ENCODE measurements at regions of chr1 and their contacts with region 1.

Region 1: GRCh38 chr1:154479764-154480421 is 22.1 kb upstream of the TDRD10 start:
- DNase-seq: peak; percentile 69 to 77
- H3K4me3 ChIP-seq: no peak overlapping the region
- H3K27ac ChIP-seq: peak overlapping the region in 1 of 2 donors; percentile 39
- H3K4me1 ChIP-seq: no peaks in the 10 kb centered on the region
- H3K27me3 ChIP-seq: no peaks in the 10 kb centered on the region
- CTCF ChIP-seq: peak; percentile 87 to 98 (median 95)
- POLR2A ChIP-seq: no peak

Region 2: DNA sequence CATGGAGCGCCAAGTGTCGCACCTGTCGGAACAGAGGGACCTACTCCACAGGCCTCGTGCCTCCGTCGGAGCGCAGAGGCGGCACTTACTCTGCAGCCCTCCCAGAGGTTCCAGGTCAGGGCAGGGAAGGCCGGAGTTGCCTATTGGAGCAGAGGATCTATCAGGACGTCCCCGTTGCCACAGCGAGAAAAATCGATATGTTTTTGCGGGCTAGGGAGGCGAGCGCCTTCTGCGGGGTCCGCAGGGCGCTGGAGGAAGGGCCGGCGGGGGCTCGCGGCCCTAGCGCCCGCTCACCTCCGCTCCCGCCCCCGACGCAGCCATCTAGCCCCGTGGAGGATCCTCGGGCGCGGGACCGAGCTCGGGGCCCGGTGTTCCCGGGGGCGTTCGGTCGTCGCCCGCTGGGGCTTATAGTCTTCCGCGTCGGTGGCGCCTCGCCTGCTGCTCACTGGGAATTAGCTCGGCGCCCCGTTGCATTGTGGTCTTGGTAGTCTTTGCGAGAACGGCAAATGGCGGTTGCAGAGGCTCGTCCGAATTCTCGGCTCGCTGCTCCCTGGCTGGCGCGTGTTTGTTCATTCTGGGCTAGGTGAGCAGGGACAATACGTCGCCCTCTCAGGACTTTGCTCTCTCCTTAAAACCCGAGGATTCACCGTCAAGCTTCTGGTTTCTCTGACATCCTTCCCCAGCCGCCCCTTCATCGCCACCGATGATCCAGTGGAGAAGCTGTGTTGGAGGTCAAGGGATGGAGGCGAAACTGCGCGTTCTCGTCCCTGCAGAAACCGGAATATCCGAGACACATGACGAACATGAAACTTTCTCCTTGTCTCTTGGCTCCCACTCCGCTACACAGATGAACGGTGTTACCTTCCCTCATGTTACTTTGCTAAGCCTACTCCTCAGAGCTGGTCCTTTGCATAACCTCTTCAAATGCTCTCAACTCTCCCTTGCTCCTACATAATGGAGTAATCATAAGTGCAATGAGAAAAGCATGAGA is 502.3 kb before region 1 on chr1 and contains the start of gene JTB:
- intact Hi-C with region 1: no loop called
- DNase-seq: peak; percentile 82 to 86
- H3K4me3 ChIP-seq: peak within 1 kb of the TSS; percentile 94 to 98
- H3K27ac ChIP-seq: peak within 1 kb of the TSS; percentile 93 to 94
- H3K4me1 ChIP-seq: peaks cover 0 to 7% of the 10 kb centered on the region in 2 donors
- H3K27me3 ChIP-seq: no peaks in the 10 kb centered on the region
- CTCF ChIP-seq: peak in 2 of 4 experiments; percentile 22 to 25
- POLR2A ChIP-seq: peak; percentile 87 to 90
- total RNA-seq, gene JTB: 91.1 to 253 (median 175) TPM

Region 3: DNA sequence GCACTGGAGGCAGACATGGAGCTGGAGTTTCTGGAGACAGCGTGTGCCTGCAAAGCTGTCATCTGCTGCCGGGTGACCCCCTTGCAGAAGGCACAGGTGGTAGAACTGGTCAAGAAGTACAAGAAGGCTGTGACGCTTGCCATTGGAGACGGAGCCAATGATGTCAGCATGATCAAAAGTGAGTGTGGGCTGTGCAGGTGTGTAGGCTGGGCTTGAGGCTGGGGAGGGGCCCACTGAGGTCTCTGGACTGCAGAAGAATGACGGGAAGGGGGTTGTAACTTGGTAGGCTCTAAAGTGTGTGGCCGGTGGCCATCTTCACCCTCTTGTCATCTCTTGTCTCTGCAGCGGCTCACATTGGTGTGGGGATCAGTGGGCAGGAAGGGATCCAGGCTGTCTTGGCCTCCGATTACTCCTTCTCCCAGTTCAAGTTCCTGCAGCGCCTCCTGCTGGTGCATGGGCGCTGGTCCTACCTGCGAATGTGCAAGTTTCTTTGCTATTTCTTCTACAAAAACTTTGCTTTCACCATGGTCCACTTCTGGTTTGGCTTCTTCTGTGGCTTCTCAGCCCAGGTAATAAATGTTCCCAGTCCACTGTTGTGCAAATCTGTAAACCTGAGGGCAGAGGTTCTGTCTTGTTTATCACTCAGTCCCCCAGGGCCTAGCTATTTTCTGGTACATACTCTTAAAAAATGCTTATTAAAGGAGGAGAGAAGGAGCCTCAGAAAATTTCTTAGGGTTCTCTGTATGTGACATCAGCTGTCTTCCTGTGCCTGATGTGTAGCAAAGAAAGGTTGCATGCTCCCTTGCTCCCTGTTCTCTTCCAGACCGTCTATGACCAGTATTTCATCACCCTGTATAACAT is 134.7 kb before region 1 on chr1:
- intact Hi-C with region 1: no loop called
- DNase-seq: no peak
- H3K4me3 ChIP-seq: no peak overlapping the region
- H3K27ac ChIP-seq: no peak overlapping the region
- H3K4me1 ChIP-seq: no peaks in the 10 kb centered on the region
- H3K27me3 ChIP-seq: no peaks in the 10 kb centered on the region
- CTCF ChIP-seq: peak in 2 of 4 experiments; percentile 15 to 44
- POLR2A ChIP-seq: no peak

Region 4: GRCh38 chr1:154539507-154540483 is 59.9 kb after region 1 on chr1:
- intact Hi-C with region 1: loop called (anchors 5 kb)
- DNase-seq: no peak
- H3K4me3 ChIP-seq: no peak overlapping the region
- H3K27ac ChIP-seq: no peak overlapping the region
- H3K4me1 ChIP-seq: no peaks in the 10 kb centered on the region
- H3K27me3 ChIP-seq: no peaks in the 10 kb centered on the region
- CTCF ChIP-seq: no peak
- POLR2A ChIP-seq: no peak

Measured in uterus (tissue), 4 donors.